ENCODE measurements at regions of chrX and their contacts with region 1.

Region 1: GRCh38 chrX:11381464-11381863 is 88.3 kb downstream of the AMELX start:
- DNase-seq: peak; percentile 33 to 54
- H3K4me3 ChIP-seq: no peak overlapping the region
- H3K4me3 Mint-ChIP-seq: no peak overlapping the region
- H3K27ac Mint-ChIP-seq: no peak overlapping the region
- H3K4me1 ChIP-seq: peaks cover 19% of the 10 kb centered on the region
- H3K4me1 Mint-ChIP-seq: peaks cover 3% of the 10 kb centered on the region
- H3K27me3 ChIP-seq: no peaks in the 10 kb centered on the region
- H3K27me3 Mint-ChIP-seq: no peaks in the 10 kb centered on the region
- CTCF ChIP-seq: peak; percentile 44 to 45

Region 2: GRCh38 chrX:11461201-11462001 is 79.9 kb after region 1 on chrX:
- CTCF ChIA-PET with region 1: interaction called, 5 read pairs
- POLR2A ChIA-PET with region 1: interaction called, 3 read pairs
- intact Hi-C with region 1: loop called (anchors 1 kb)
- DNase-seq: peak; percentile 63 to 79
- H3K4me3 ChIP-seq: no peak overlapping the region
- H3K4me3 Mint-ChIP-seq: peak overlapping the region; percentile 41
- H3K27ac Mint-ChIP-seq: peak overlapping the region; percentile 83
- H3K4me1 ChIP-seq: peaks cover 44% of the 10 kb centered on the region
- H3K4me1 Mint-ChIP-seq: peaks cover 17% of the 10 kb centered on the region
- H3K27me3 ChIP-seq: no peaks in the 10 kb centered on the region
- H3K27me3 Mint-ChIP-seq: no peaks in the 10 kb centered on the region
- CTCF ChIP-seq: no peak

Region 3: GRCh38 chrX:11509786-11510185 is 128.3 kb after region 1 on chrX:
- CTCF ChIA-PET with region 1: no interaction called
- POLR2A ChIA-PET with region 1: no interaction called
- intact Hi-C with region 1: loop called (anchors 5 kb)
- DNase-seq: peak; percentile 68 to 71
- H3K4me3 ChIP-seq: no peak overlapping the region
- H3K4me3 Mint-ChIP-seq: no peak overlapping the region
- H3K27ac Mint-ChIP-seq: peak overlapping the region; percentile 65
- H3K4me1 ChIP-seq: peaks cover 23% of the 10 kb centered on the region
- H3K4me1 Mint-ChIP-seq: peaks cover 8% of the 10 kb centered on the region
- H3K27me3 ChIP-seq: no peaks in the 10 kb centered on the region
- H3K27me3 Mint-ChIP-seq: no peaks in the 10 kb centered on the region
- CTCF ChIP-seq: no peak